Right ventricle myocardium inferior (tissue), 1 donor: ENCODE measurements at regions of chr21 and their contacts with region 1.

Region 1: DNA sequence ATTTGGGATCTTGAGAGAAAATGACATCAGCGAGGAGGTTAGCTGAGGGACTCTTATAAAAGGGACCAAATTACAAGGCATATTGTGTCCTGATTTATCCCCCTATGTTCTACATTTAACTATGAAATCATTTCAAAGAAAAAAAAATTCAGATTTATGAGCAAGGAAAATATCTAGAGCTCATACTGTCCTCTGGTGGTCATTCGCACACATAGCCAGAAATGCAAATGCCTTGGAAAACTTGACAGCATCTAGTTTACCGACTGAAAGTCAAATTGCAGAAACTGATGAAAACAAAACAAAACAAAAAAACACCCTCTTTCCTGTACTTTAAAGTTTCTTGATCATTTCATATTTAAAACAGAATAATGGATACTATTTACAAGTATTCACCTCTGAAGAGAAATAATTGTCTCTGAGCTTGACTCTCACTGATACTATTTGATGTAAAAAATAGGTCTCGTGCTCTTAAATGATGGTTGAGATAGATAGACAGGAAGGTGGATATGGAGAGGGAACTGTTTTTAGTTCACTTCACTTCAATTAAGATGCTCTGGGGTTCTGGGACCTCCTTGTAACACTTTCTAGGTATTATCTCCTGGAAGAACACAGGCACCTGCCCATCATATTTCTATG is 253.8 kb downstream of the PCP4 start:
- DNase-seq: no peak
- ATAC-seq: no peak

Region 2: DNA sequence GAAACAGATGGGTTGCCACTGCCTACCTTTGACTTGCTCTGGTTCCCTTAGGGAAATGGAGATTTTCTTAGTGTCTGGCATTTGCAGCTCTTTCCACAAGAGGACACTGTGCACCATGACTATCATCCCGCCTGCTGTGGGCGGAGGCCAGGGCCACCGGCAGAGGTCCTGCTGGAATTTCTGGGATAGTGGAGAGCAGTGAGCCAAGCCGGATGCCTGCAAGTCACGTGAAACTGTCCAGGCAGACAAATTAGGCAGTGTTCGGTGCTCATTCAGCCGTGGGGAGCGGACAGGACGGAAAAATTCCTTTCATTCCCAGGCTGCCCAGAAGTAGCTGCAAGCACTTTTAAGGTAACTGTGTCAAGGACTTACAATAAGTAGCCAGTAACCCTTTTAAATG is 332.7 kb before region 1 on chr21:
- intact Hi-C with region 1: loop called (anchors 1 kb)
- DNase-seq: peak; percentile 83
- ATAC-seq: peak; percentile 98

Region 3: DNA sequence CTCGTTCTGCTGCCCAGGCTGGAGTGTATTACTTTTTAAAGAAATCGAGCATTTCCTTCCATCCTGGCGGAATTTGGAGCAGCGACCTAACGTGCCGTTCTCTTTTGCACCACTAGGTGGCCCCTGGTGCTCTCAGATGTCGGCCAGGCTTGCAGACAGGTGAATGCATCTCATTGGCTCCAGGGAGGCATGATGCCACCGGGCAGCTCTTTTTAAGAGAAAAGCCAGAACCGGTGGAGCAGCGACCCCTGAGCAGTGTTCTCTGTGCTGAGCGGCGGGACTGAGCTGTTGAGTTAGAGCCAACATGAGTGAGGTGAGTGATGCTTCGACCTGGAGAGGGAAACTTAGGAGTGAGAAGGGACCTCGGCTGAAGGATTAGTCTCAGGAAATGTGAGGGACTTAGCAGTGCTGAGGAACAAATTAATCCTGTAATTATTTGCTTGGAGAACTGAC is 253.8 kb before region 1 on chr21 and contains the start of gene PCP4:
- intact Hi-C with region 1: loop called (anchors 2 kb)
- DNase-seq: no peak
- ATAC-seq: no peak
- total RNA-seq, gene PCP4: 5.4 TPM

Region 4: DNA sequence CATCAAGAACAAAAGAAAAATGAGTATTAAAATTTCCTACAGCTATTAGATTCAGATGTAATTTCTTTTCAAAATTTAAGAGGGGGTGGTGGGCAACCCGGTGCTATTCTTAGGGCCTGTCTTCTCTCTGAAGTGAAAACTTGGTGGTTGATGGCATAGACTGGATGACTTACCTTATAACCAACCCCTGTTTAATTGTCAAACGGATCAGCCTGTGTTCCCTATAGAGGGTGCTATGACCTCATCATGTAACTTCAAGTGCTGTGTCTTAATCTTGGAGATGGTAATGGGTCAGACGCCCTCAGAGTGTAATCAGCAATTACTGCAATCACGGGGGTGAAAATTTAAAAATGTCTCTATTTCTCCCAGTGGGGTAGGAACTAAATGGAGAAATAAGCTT is 77.6 kb before region 1 on chr21:
- intact Hi-C with region 1: loop called (anchors 2 kb)
- DNase-seq: no peak
- ATAC-seq: peak; percentile 56